ENCODE measurements at regions of chrX and their contacts with region 1.

Region 1: GRCh38 chrX:119729408-119730201 is 28.8 kb upstream of the SOWAHD start:
- DNase-seq: peak; percentile 35
- H3K4me3 Mint-ChIP-seq: no peak overlapping the region
- H3K27ac Mint-ChIP-seq: no peak overlapping the region
- H3K4me1 Mint-ChIP-seq: peaks cover 6% of the 10 kb centered on the region
- H3K27me3 Mint-ChIP-seq: no peaks in the 10 kb centered on the region

Region 2: GRCh38 chrX:119606280-119607015 is 123.2 kb before region 1 on chrX and contains the start of gene NKRF:
- intact Hi-C with region 1: loop called (anchors 5 kb)
- DNase-seq: peak; percentile 86
- H3K4me3 Mint-ChIP-seq: peak within 1 kb of the TSS; percentile 97
- H3K27ac Mint-ChIP-seq: peak within 1 kb of the TSS; percentile 96
- H3K4me1 Mint-ChIP-seq: peaks cover 20% of the 10 kb centered on the region
- H3K27me3 Mint-ChIP-seq: no peaks in the 10 kb centered on the region
- total RNA-seq, gene NKRF: 25.1 and 25.9 TPM in 2 replicates

Region 3: DNA sequence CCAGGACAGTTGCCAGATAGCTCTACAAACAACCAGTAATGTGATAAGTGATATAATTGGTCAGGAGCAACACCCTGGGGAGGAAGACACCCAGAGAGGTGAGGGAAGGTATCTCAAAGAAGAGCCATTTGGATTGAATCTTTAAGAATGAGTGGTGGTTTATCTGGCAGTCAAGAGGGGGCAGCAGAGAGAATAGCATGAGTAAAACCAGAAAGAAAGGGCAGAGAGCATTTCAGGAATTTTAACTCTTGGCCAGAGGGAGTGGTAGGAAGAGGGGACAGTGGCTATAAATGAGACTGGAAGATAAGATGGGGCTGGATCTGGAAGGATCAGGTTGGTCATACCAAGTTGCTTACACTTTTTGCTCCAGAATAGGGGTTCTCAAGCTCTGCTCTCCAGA is 30.8 kb before region 1 on chrX:
- intact Hi-C with region 1: loop called (anchors 2 kb)
- DNase-seq: no peak
- H3K4me3 Mint-ChIP-seq: no peak overlapping the region
- H3K27ac Mint-ChIP-seq: no peak overlapping the region
- H3K4me1 Mint-ChIP-seq: peaks cover 6% of the 10 kb centered on the region
- H3K27me3 Mint-ChIP-seq: no peaks in the 10 kb centered on the region

Region 4: GRCh38 chrX:119757979-119758730 is 28.6 kb after region 1 on chrX and contains the start of gene SOWAHD:
- intact Hi-C with region 1: no loop called
- DNase-seq: peak; percentile 9
- H3K4me3 Mint-ChIP-seq: peak within 1 kb of the TSS; percentile 77
- H3K27ac Mint-ChIP-seq: peak within 1 kb of the TSS; percentile 100
- H3K4me1 Mint-ChIP-seq: peaks cover 50% of the 10 kb centered on the region
- H3K27me3 Mint-ChIP-seq: no peaks in the 10 kb centered on the region
- total RNA-seq, gene SOWAHD: 0.46 and 0.59 TPM in 2 replicates

Measured in activated T-helper 2 cell treated with anti-CD3 and anti-CD28 coated beads, Interferon-gamma antibody, Interleukin-2, Interleukin-4, amounts not matched to agents 10 μg/mL and 5 μg/mL and 100 μg/mL, durations not matched to agents 14 hours and 24 hours and 36 hours (primary cell).